ENCODE measurements at regions of chr6 and their contacts with region 1.

Region 1: DNA sequence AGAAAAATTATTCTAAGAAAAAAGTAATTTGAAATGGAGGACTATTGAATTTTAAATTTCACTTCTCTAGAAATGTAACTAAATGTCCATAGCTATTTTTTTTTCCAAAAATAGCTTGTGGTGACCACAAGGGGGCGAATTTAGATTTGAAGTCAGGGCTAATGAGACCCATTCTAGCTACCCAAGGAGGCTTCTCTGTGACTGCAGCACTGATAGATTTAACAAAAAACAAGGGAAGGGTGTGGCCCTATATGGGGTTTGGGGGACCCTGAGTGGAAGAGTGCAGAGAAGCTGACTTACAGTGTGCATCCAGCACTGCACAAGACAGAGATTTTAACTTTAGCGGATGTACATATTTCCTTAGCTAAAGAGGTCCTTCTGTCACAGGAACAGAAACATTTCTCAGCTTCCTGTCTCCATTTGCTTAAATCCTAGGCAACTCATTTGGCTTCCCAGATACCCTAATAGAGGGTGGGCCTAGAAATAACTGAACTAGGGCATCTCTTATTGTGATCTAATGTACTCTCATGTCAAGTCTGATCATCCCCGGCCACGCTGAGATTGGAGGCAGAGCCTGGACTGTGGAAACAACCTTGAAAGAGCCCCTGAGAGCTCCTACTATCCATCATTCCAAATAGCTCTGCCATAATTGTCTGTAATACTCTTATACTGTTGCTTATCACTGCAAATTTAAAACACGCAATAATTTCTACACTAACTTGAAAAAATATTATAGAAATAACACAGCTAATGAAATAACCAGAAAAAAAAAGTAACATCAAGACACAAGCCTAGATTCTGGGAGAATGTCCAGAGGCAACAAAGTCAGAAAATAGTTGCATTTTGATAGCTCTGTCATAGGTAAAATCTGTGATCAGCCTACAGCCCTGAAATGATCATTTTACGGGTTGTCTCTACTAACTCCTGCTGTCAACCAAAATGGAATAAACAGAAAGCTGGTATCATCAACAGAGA is 93.6 kb downstream of the SNAP91 start:
- DNase-seq: no peak

Region 2: GRCh38 chr6:83096791-83097190 is 518.5 kb before region 1 on chr6:
- intact Hi-C with region 1: no loop called
- DNase-seq: no peak

Region 3: GRCh38 chr6:83824388-83824801 is 209.1 kb after region 1 on chr6:
- intact Hi-C with region 1: no loop called
- DNase-seq: no peak

Region 4: GRCh38 chr6:84218091-84218490 is 602.8 kb after region 1 on chr6:
- intact Hi-C with region 1: loop called (anchors 2 kb)
- DNase-seq: no peak